ENCODE measurements at regions of chr3 and their contacts with region 1.

Region 1: GRCh38 chr3:196186651-196187573 is 24.3 kb downstream of the ZDHHC19 start:
- DNase-seq: peak in 6 of 14 experiments; percentile 10 to 62 (median 36)
- ATAC-seq: peak; percentile 37
- H3K4me3 ChIP-seq: peak overlapping the region; percentile 15
- H3K4me3 Mint-ChIP-seq: peak overlapping the region; percentile 54
- H3K27ac ChIP-seq: peak overlapping the region in 1 of 2 donors; percentile 11
- H3K27ac Mint-ChIP-seq: peak overlapping the region; percentile 83
- H3K4me1 ChIP-seq: peaks cover 39% of the 10 kb centered on the region
- H3K4me1 Mint-ChIP-seq: peaks cover 18% of the 10 kb centered on the region
- H3K27me3 ChIP-seq: no peaks in the 10 kb centered on the region
- H3K27me3 Mint-ChIP-seq: no peaks in the 10 kb centered on the region
- CTCF ChIP-seq: no peak

Region 2: GRCh38 chr3:196198771-196199753 is 12.2 kb after region 1 on chr3:
- CTCF ChIA-PET with region 1: interaction called, 13 read pairs
- POLR2A ChIA-PET with region 1: interaction called, 3 read pairs
- intact Hi-C with region 1: no loop called
- DNase-seq: no peak
- ATAC-seq: no peak
- H3K4me3 ChIP-seq: no peak overlapping the region
- H3K4me3 Mint-ChIP-seq: no peak overlapping the region
- H3K27ac ChIP-seq: no peak overlapping the region
- H3K27ac Mint-ChIP-seq: no peak overlapping the region
- H3K4me1 ChIP-seq: peaks cover 21% of the 10 kb centered on the region
- H3K4me1 Mint-ChIP-seq: no peaks in the 10 kb centered on the region
- H3K27me3 ChIP-seq: no peaks in the 10 kb centered on the region
- H3K27me3 Mint-ChIP-seq: no peaks in the 10 kb centered on the region
- CTCF ChIP-seq: no peak

Measured in CD4-positive, alpha-beta T cell (primary cell).